H1 (cell line): ENCODE measurements at regions of chr4 and their contacts with region 1.

Region 1: GRCh38 chr4:52721968-52722815 is 29.0 kb downstream of the ERVMER34-1 start:
- DNase-seq: peak; percentile 92 to 98
- H3K4me3 ChIP-seq: peak overlapping the region; percentile 38 to 59 (median 52)
- H3K27ac ChIP-seq: peak overlapping the region; percentile 49; the same call in 1 of the 2 replicates
- H3K4me1 ChIP-seq: peaks cover 0 to 5% (median 1%) of the 10 kb centered on the region in 4 experiments; a peak in 3 of 7 replicates
- H3K27me3 ChIP-seq: no peaks in the 10 kb centered on the region
- CTCF ChIP-seq: no peak
- EP300 ChIP-seq: 0 out of 3 replicates have a peak, but pooled peaks of 1 of the 2 experiments have one; percentile 4
- POLR2A ChIP-seq: peak; percentile 97 to 99
- RAD21 ChIP-seq: peak; percentile 1 to 3; a peak in 2 of 4 replicates

Region 2: GRCh38 chr4:52588097-52588782 is 134.0 kb before region 1 on chr4:
- CTCF ChIA-PET with region 1: interaction called, 3 read pairs
- POLR2A ChIA-PET with region 1: interaction called, 11 read pairs
- DNase-seq: peak; percentile 15 to 70
- H3K4me3 ChIP-seq: no peak overlapping the region
- H3K27ac ChIP-seq: no peak overlapping the region
- H3K4me1 ChIP-seq: no peaks in the 10 kb centered on the region
- H3K27me3 ChIP-seq: no peaks in the 10 kb centered on the region
- CTCF ChIP-seq: peak; percentile 60 to 85 (median 79)
- EP300 ChIP-seq: no peak
- POLR2A ChIP-seq: no peak
- RAD21 ChIP-seq: peak; percentile 72 to 77

Region 3: DNA sequence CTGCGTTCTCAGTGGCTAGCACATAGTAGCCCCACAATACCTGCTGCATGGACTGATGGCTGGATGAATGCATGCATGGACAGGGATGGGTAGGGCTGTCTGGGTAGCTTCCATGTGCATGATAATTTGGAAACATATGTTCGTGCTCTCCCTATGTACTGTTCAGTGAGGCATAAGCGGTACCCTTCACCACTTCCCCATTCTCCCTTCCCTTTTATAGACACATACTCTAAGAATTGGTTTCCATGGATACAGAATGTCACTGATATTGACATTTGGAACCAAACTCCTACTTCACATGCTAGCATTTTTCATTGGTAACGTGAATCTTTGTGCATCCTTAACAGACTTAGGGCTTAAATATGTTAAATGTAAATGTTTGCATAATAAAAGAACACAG is 83.5 kb before region 1 on chr4:
- CTCF ChIA-PET with region 1: no interaction called
- POLR2A ChIA-PET with region 1: no interaction called
- DNase-seq: no peak
- H3K4me3 ChIP-seq: no peak overlapping the region
- H3K27ac ChIP-seq: no peak overlapping the region
- H3K4me1 ChIP-seq: peaks cover 0 to 5% (median under 1%) of the 10 kb centered on the region in 4 experiments; a peak in 2 of 7 replicates
- H3K27me3 ChIP-seq: no peaks in the 10 kb centered on the region
- CTCF ChIP-seq: no peak
- EP300 ChIP-seq: no peak
- POLR2A ChIP-seq: no peak
- RAD21 ChIP-seq: no peak

Region 4: DNA sequence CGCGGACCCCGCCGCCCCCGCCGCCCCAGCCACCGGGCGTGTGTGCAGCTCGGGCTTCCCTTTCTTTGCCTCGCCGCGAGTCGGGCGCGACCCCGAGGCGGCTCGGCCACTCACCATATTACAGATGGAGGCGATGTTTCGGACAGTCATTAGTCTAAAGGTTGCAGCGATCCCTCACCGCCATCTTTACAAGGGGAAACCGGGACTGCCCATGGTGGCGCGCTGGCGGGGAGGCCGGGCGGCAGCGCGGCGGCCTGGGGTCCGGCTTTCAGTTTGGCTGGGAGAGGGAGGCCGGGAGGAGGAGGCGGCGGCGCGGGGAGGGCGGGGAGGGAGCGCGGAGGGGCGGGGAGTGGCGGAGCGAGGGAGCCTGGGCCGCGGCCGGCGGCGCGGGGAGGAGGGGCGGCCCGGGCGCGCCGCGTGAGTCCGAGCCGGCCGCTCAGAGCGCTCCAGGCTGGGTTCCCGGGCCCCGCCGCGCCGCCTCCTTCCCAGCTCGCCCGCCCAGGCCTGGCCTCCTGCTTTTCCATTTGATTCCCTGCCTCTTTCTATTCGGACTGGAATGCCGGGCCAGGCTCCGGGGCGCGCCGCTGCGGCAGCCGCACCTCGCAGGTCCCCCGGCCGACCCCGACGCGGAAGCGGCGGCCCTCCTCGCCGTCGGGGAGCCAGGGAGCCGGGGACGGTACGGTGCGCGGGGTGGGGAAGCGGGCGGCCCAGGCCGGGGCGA is 63.0 kb before region 1 on chr4 and contains the start of gene USP46:
- CTCF ChIA-PET with region 1: interaction called, 3 read pairs
- POLR2A ChIA-PET with region 1: interaction called, 22 read pairs
- DNase-seq: peak in 1 of 2 experiments; percentile 74
- H3K4me3 ChIP-seq: peak within 1 kb of the TSS; percentile 73 to 98 (median 87)
- H3K27ac ChIP-seq: peak within 1 kb of the TSS; percentile 72; the same call in 1 of the 2 replicates
- H3K4me1 ChIP-seq: peaks cover 0 to 15% (median 9%) of the 10 kb centered on the region in 4 experiments; a peak in 6 of 7 replicates
- H3K27me3 ChIP-seq: peaks cover 0 to 5% (median 2%) of the 10 kb centered on the region in 4 experiments; a peak in 4 of 7 replicates
- CTCF ChIP-seq: no peak
- EP300 ChIP-seq: no peak
- POLR2A ChIP-seq: peak; percentile 44 to 51
- RAD21 ChIP-seq: no peak
- total RNA-seq, gene USP46: 53.4 and 62.4 TPM in 2 replicates

Region 5: GRCh38 chr4:52837726-52838558 is 115.8 kb after region 1 on chr4:
- CTCF ChIA-PET with region 1: no interaction called
- POLR2A ChIA-PET with region 1: interaction called, 14 read pairs
- DNase-seq: no peak
- H3K4me3 ChIP-seq: no peak overlapping the region
- H3K27ac ChIP-seq: no peak overlapping the region
- H3K4me1 ChIP-seq: peaks cover 7 to 25% (median 17%) of the 10 kb centered on the region in 4 experiments
- H3K27me3 ChIP-seq: no peaks in the 10 kb centered on the region
- CTCF ChIP-seq: no peak
- EP300 ChIP-seq: no peak
- POLR2A ChIP-seq: no peak
- RAD21 ChIP-seq: no peak

Region 6: GRCh38 chr4:52869196-52869595 is 147.0 kb after region 1 on chr4:
- CTCF ChIA-PET with region 1: interaction called, 4 read pairs
- POLR2A ChIA-PET with region 1: interaction called, 21 read pairs
- DNase-seq: no peak
- H3K4me3 ChIP-seq: no peak overlapping the region
- H3K27ac ChIP-seq: no peak overlapping the region
- H3K4me1 ChIP-seq: peaks cover 7 to 24% (median 15%) of the 10 kb centered on the region in 4 experiments
- H3K27me3 ChIP-seq: no peaks in the 10 kb centered on the region; a peak in 2 of 7 replicates
- CTCF ChIP-seq: no peak
- EP300 ChIP-seq: no peak
- POLR2A ChIP-seq: no peak
- RAD21 ChIP-seq: no peak

Region 7: DNA sequence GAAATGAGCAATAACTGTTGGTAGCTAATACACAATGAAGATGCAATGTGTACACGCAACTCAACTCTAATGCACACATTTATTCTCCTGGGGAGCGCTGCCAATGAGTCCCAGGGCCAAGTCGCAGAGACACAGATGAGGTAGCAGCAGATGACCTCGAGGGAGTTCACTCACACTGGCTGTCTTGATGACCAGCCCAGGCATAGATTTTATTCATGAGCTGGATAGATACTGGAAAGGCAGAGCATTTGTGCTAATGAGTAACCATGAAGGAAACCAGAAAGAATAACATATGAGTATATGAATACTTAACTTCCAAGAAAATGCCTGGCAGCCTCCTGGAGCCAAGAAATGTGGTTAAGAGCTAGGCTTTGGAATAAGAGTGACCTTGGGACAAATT is 182.2 kb after region 1 on chr4:
- CTCF ChIA-PET with region 1: no interaction called
- POLR2A ChIA-PET with region 1: interaction called, 10 read pairs
- DNase-seq: no peak
- H3K4me3 ChIP-seq: no peak overlapping the region
- H3K27ac ChIP-seq: no peak overlapping the region
- H3K4me1 ChIP-seq: peaks cover 0 to 3% (median 0%) of the 10 kb centered on the region in 4 experiments; a peak in 2 of 7 replicates
- H3K27me3 ChIP-seq: no peaks in the 10 kb centered on the region
- CTCF ChIP-seq: no peak
- EP300 ChIP-seq: no peak
- POLR2A ChIP-seq: no peak
- RAD21 ChIP-seq: no peak